Ascending aorta (tissue), 2 donors: ENCODE measurements at regions of chrX and their contacts with region 1.

Region 1: DNA sequence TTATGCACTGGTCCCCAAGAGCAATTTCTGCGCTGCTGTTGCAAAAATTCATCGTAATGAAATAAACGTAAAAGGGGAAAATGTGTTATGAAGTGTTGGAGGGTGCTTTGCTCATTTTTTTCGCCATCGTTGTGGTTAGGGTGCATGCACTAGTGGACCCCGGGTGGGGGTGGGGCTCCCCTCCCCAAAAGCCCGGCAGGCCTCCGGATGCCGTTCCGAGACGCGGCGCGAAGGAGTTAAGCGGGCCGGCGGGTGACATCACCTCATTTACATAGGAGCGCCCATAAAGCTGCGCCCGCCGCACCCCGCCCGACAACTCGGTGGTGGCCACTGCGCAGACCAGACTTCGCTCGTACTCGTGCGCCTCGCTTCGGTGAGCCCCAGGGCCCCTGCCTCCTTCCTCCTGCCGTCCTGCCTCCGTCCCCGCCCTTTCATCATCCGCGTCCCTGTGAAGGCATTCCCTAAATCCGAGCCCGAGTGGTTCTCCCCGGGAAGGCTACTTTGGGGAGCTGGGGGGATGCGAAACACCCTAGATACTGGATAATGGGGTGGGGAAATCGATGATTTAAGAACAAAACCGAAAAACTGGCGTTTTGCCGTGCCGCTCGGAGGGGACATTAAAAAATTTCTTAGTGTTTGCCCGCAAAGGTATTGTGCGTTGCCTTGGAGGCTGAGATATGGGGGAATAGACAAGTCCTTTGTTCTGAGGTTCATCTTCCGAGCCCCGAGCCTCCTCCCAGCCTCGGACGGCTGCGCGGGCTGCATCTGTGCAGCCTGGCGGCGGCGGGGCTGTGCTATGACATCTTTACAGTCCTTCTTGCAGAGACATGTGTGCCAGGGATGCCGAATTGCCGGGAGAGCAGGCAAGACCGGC is at the start of gene TMSB4X:
- DNase-seq: peak in 1 of 2 donors; percentile 91
- H3K4me3 ChIP-seq: peak within 1 kb of the TSS; percentile 70 to 78
- H3K27ac ChIP-seq: peak within 1 kb of the TSS; percentile 86 to 94
- H3K4me1 ChIP-seq: peaks cover 0 to 13% of the 10 kb centered on the region in 2 donors
- H3K27me3 ChIP-seq: no peaks in the 10 kb centered on the region
- CTCF ChIP-seq: no peak
- total RNA-seq, gene TMSB4X: 2,397 TPM

Region 2: DNA sequence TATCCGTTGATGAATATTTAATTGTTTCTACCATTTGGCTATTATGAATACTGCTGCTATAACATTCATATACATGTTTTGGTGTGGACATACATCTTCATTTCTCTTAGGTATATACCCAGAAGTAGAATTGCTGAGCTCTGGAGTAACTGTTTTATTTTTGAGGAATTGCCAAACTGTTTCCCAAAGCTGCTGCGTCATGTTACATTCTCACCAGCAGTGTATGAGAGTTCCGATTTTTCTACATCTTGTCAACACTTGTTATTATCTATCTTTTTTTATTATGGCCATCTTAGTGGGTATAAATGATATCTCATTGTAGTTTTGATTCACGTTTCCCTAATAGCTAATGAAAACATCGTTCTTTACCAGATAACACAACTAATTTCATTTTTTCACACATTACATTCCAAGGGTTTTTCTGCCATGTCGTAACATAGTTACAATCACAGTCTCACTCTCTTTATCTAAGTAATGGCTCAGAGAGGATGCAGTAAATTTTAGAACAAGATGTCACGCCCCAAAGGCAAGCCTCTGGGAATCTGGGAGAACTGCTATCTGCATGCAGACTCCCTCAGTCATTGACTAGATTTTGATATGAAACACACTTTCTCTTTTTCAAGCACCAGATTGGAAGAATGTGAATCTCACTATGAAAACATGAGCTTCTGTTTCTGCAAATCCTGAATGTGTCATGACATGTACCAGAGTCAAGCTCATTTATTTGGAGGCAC is 1319.6 kb before region 1 on chrX:
- intact Hi-C with region 1: no loop called
- DNase-seq: no peak
- H3K4me3 ChIP-seq: no peak overlapping the region
- H3K27ac ChIP-seq: no peak overlapping the region
- H3K4me1 ChIP-seq: no peaks in the 10 kb centered on the region
- H3K27me3 ChIP-seq: no peaks in the 10 kb centered on the region
- CTCF ChIP-seq: no peak

Region 3: DNA sequence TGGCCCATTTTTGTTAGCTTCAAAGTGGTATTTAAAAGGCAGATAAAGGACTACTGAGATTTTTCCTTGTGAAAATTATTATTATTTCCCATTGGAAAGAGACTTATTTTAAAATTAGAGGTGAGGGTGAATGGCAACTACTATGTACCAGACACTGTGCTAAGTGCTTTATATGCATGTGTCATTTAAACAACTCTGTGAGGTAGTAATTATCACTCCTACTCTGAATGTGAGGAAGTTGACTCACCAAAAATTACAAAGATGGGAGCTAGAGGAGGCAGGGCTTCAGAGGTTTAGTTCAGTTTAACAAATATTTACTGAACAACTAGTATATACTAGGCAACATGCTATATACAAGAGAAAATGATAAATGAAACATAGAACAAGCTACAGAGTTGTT is 1138.7 kb before region 1 on chrX:
- intact Hi-C with region 1: no loop called
- DNase-seq: no peak
- H3K4me3 ChIP-seq: no peak overlapping the region
- H3K27ac ChIP-seq: no peak overlapping the region
- H3K4me1 ChIP-seq: no peaks in the 10 kb centered on the region
- H3K27me3 ChIP-seq: no peaks in the 10 kb centered on the region
- CTCF ChIP-seq: no peak

Region 4: DNA sequence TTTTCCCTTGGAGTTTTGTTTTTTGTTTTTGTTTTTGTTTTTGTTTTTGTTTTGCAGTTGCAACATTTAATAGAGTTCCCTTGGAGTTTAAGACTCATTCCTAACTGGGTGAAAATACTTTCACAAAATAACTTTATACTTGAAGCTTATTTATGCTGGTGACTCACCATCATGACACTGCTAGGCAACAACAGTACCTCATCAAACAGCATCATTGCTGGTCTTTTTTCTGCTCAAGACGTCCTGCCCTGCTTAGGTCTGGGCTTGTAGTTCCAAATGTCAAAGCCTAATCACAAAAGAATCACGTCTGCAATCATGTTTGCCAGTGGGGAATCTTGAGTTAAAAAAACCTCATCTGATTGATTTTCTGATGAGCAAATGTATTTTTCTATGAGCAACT is 289.5 kb before region 1 on chrX:
- intact Hi-C with region 1: no loop called
- DNase-seq: no peak
- H3K4me3 ChIP-seq: no peak overlapping the region
- H3K27ac ChIP-seq: no peak overlapping the region
- H3K4me1 ChIP-seq: no peaks in the 10 kb centered on the region
- H3K27me3 ChIP-seq: no peaks in the 10 kb centered on the region
- CTCF ChIP-seq: no peak

Region 5: GRCh38 chrX:12843668-12844279 is 131.3 kb before region 1 on chrX:
- intact Hi-C with region 1: no loop called
- DNase-seq: no peak
- H3K4me3 ChIP-seq: no peak overlapping the region
- H3K27ac ChIP-seq: no peak overlapping the region
- H3K4me1 ChIP-seq: no peaks in the 10 kb centered on the region
- H3K27me3 ChIP-seq: no peaks in the 10 kb centered on the region
- CTCF ChIP-seq: no peak

Region 6: GRCh38 chrX:13110433-13111324 is 135.6 kb after region 1 on chrX:
- intact Hi-C with region 1: loop called (anchors 5 kb)
- DNase-seq: peak in 1 of 2 donors; percentile 83
- H3K4me3 ChIP-seq: no peak overlapping the region
- H3K27ac ChIP-seq: peak overlapping the region; percentile 65 to 76
- H3K4me1 ChIP-seq: peaks cover 0 to 2% of the 10 kb centered on the region in 2 donors
- H3K27me3 ChIP-seq: no peaks in the 10 kb centered on the region
- CTCF ChIP-seq: no peak

Region 7: GRCh38 chrX:13398073-13398823 is 423.2 kb after region 1 on chrX:
- intact Hi-C with region 1: loop called (anchors 10 kb)
- DNase-seq: peak; percentile 26 to 86
- H3K4me3 ChIP-seq: no peak overlapping the region
- H3K27ac ChIP-seq: peak overlapping the region; percentile 59 to 65
- H3K4me1 ChIP-seq: peaks cover 0 to 7% of the 10 kb centered on the region in 2 donors
- H3K27me3 ChIP-seq: no peaks in the 10 kb centered on the region
- CTCF ChIP-seq: no peak

Region 8: DNA sequence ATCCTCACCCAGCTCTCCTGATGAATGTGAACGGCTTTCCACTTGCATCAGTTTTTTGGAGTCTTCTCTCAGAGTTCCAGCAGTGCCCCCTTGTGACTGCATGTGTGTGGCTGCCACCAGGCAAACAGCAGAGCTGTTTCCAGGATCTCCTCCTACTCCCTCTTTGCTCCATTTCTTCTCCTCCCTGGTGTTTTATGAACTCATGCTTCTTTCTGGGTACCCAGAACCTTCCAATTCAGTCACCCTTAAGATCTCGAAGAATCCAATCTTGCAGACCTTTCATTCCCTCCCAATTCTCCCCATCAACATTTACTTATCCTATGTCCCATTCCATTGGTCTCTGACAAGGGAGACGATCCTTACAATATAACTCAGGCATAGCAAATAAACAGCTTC is 671.1 kb after region 1 on chrX:
- intact Hi-C with region 1: loop called (anchors 5 kb)
- DNase-seq: peak in 1 of 2 donors; percentile 81
- H3K4me3 ChIP-seq: no peak overlapping the region
- H3K27ac ChIP-seq: no peak overlapping the region
- H3K4me1 ChIP-seq: no peaks in the 10 kb centered on the region
- H3K27me3 ChIP-seq: no peaks in the 10 kb centered on the region
- CTCF ChIP-seq: peak; percentile 42 to 74 (median 72)